ENCODE measurements at regions of chr10 and their contacts with region 1.

Region 1: GRCh38 chr10:94066411-94066810 is 72.7 kb downstream of the PLCE1 start:
- DNase-seq: peak; percentile 64 to 73
- H3K4me3 ChIP-seq: no peak overlapping the region
- H3K4me3 Mint-ChIP-seq: no peak overlapping the region
- H3K27ac Mint-ChIP-seq: no peak overlapping the region
- H3K4me1 ChIP-seq: peaks cover 17% of the 10 kb centered on the region
- H3K4me1 Mint-ChIP-seq: peaks cover 19% of the 10 kb centered on the region
- H3K27me3 ChIP-seq: no peaks in the 10 kb centered on the region
- H3K27me3 Mint-ChIP-seq: no peaks in the 10 kb centered on the region
- CTCF ChIP-seq: no peak

Region 2: GRCh38 chr10:93386631-93387369 is 679.6 kb before region 1 on chr10:
- CTCF ChIA-PET with region 1: no interaction called
- POLR2A ChIA-PET with region 1: no interaction called
- intact Hi-C with region 1: no loop called
- DNase-seq: no peak
- H3K4me3 ChIP-seq: no peak overlapping the region
- H3K4me3 Mint-ChIP-seq: no peak overlapping the region
- H3K27ac Mint-ChIP-seq: no peak overlapping the region
- H3K4me1 ChIP-seq: no peaks in the 10 kb centered on the region
- H3K4me1 Mint-ChIP-seq: no peaks in the 10 kb centered on the region
- H3K27me3 ChIP-seq: no peaks in the 10 kb centered on the region
- H3K27me3 Mint-ChIP-seq: no peaks in the 10 kb centered on the region
- CTCF ChIP-seq: no peak

Region 3: GRCh38 chr10:94052866-94053791 is 13.3 kb before region 1 on chr10:
- CTCF ChIA-PET with region 1: no interaction called
- POLR2A ChIA-PET with region 1: no interaction called
- intact Hi-C with region 1: loop called (anchors 2 kb)
- DNase-seq: no peak
- H3K4me3 ChIP-seq: no peak overlapping the region
- H3K4me3 Mint-ChIP-seq: no peak overlapping the region
- H3K27ac Mint-ChIP-seq: no peak overlapping the region
- H3K4me1 ChIP-seq: peaks cover 18% of the 10 kb centered on the region
- H3K4me1 Mint-ChIP-seq: no peaks in the 10 kb centered on the region
- H3K27me3 ChIP-seq: no peaks in the 10 kb centered on the region
- H3K27me3 Mint-ChIP-seq: no peaks in the 10 kb centered on the region
- CTCF ChIP-seq: no peak